Upper lobe of right lung (tissue), 1 donor: ENCODE measurements at regions of chr7 and their contacts with region 1.

Region 1: DNA sequence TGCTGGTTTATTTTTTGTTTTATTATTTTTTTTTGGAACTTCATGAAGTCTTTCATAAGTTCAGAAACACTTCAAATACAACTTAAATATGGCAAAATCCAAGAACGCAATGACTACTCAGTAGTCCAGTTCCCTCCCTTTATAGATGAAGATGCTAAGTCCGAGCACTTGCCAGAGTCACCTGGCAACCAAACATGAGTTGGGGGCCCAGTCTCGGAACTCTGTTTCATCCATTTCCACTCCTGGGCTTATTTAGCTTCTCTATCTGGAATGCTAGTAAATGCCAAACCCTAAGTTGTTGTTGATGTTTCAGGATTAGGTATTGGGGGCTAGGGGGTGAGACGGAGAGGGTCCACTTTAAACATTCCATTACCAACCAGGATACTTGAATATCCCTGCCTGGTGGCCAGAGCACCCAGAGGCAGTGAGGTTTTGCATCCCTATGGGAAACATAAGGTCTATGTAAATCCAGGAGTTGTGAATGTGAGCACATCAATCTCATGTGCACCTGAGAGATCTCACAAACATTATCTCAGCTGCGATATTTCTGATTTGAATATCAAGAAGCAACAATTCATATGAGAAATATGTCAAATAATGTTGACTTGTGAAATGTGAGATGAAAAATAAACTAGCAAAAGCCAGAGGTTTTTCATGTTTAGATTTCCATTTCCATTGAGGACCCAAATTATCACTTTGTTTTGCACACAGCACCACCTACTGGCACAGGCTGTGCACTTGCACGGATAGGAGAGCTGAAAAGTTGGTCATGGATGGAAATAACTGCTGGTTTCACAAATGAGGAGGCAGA is 129.3 kb downstream of the PKD1L1 start:
- DNase-seq: peak; percentile 72
- ATAC-seq: peak; percentile 88
- H3K4me3 ChIP-seq: no peak overlapping the region
- H3K27ac ChIP-seq: no peak overlapping the region
- H3K4me1 ChIP-seq: no peaks in the 10 kb centered on the region
- H3K27me3 ChIP-seq: no peaks in the 10 kb centered on the region
- CTCF ChIP-seq: peak; percentile 95

Region 2: GRCh38 chr7:47273974-47274766 is 544.8 kb before region 1 on chr7:
- intact Hi-C with region 1: loop called (anchors 5 kb)
- DNase-seq: no peak
- ATAC-seq: peak; percentile 21
- H3K4me3 ChIP-seq: no peak overlapping the region
- H3K27ac ChIP-seq: no peak overlapping the region
- H3K4me1 ChIP-seq: no peaks in the 10 kb centered on the region
- H3K27me3 ChIP-seq: no peaks in the 10 kb centered on the region
- CTCF ChIP-seq: no peak

Region 3: GRCh38 chr7:47444379-47445057 is 374.5 kb before region 1 on chr7:
- intact Hi-C with region 1: loop called (anchors 10 kb)
- DNase-seq: peak; percentile 25
- ATAC-seq: peak; percentile 67
- H3K4me3 ChIP-seq: no peak overlapping the region
- H3K27ac ChIP-seq: no peak overlapping the region
- H3K4me1 ChIP-seq: peaks cover 30% of the 10 kb centered on the region
- H3K27me3 ChIP-seq: no peaks in the 10 kb centered on the region
- CTCF ChIP-seq: peak; percentile 63